HEK293T (cell line): ENCODE measurements at regions of chr1 and their contacts with region 1.

Region 1: DNA sequence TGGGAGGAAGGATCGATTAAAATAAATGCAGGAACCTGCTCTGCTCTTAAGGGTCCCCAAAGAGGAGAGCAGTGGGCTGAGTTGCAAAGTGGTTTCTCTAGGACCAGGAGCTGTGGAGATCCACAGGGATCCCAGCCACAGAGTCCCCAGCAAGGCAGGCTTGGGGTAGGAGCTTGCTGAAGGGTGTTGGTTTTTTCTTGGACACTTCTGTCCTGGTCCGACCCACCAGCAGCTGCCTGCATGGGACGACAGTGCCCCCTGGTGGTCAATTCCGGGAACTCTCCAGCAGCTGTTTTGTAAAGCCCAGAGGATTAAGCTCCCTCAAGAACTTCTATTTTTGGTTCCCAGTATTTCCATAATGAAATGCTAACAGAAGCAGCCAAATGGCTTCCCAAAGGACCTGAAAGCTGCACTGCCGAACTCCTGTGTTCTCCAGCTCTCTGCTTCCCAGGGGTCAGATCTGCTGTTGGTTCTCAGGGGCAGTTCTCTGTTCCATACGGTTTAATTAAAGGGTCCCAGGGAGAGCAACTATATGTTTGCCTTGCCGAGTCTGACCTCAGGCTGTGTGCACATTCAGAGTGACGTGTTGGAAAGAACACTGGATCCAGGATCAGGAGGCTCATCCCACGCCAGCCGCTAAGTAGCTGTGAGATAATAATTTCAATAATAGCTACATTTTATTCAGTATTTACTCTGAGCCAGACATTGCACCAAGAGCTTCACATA is 23.2 kb downstream of the NENF start:
- DNase-seq: peak; percentile 96

Region 2: GRCh38 chr1:211680752-211681327 is 775.1 kb before region 1 on chr1:
- CTCF ChIA-PET with region 1: interaction called, 10 read pairs
- POLR2A ChIA-PET with region 1: no interaction called
- DNase-seq: peak; percentile 86

Region 3: DNA sequence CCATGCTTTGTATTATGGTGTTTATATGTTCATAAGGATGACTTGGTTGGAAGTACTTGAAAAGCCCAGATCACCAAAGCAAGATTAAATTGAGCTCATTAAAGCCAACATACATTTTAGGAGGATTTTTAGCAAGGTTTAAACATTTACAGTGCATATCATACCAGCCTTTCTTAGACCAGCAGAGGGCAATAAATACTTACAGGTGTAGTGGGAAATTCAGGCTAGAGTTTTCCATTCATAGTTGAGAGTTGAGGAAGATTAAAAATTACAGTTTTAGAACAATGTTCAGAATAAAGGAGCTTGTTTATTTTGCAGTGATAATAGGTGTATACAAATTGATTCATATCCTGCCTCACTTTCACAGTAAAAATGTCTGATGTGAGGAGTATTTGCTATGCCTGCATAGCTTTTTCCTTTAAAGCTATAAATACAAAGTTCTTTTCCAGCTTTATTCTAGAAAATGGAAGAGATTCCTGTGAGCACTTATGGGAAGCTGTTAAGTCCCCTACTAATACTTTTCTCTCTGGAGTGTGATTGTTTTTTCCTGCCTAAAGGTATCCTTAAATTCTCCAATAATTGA is 385.2 kb before region 1 on chr1:
- CTCF ChIA-PET with region 1: interaction called, 11 read pairs
- POLR2A ChIA-PET with region 1: no interaction called
- DNase-seq: no peak

Region 4: GRCh38 chr1:212368073-212368484 is 87.9 kb before region 1 on chr1:
- CTCF ChIA-PET with region 1: interaction called, 10 read pairs
- POLR2A ChIA-PET with region 1: no interaction called
- DNase-seq: peak; percentile 85